ENCODE measurements at regions of chr15 and their contacts with region 1.

Region 1: GRCh38 chr15:78034495-78035191 is 42.9 kb downstream of the TBC1D2B start:
- DNase-seq: peak; percentile 66 to 76 (median 75)
- H3K4me3 ChIP-seq: peak overlapping the region in 1 of 3 experiments; percentile 63
- H3K4me3 Mint-ChIP-seq: peak overlapping the region; percentile 79 to 92
- H3K27ac ChIP-seq: peak overlapping the region; percentile 73 to 84
- H3K27ac Mint-ChIP-seq: peak overlapping the region; percentile 89 to 95 (median 92)
- H3K4me1 ChIP-seq: peaks cover 78 to 82% of the 10 kb centered on the region in 2 donors
- H3K4me1 Mint-ChIP-seq: peaks cover 79% of the 10 kb centered on the region
- H3K27me3 ChIP-seq: no peaks in the 10 kb centered on the region
- H3K27me3 Mint-ChIP-seq: peaks cover 0 to 1% (median 0%) of the 10 kb centered on the region in 3 donors
- CTCF ChIP-seq: no peak

Region 2: GRCh38 chr15:78049691-78050440 is 15.2 kb after region 1 on chr15:
- intact Hi-C with region 1: no loop called
- DNase-seq: peak in 1 of 3 donors; percentile 38
- H3K4me3 ChIP-seq: no peak overlapping the region
- H3K4me3 Mint-ChIP-seq: peak overlapping the region in 1 of 2 donors; percentile 62
- H3K27ac ChIP-seq: peak overlapping the region in 1 of 2 donors; percentile 33
- H3K27ac Mint-ChIP-seq: peak overlapping the region in 4 of 7 donors; percentile 14 to 73 (median 45)
- H3K4me1 ChIP-seq: peaks cover 58 to 65% of the 10 kb centered on the region in 2 donors
- H3K4me1 Mint-ChIP-seq: peaks cover 76% of the 10 kb centered on the region
- H3K27me3 ChIP-seq: no peaks in the 10 kb centered on the region
- H3K27me3 Mint-ChIP-seq: no peaks in the 10 kb centered on the region
- CTCF ChIP-seq: no peak

Region 3: DNA sequence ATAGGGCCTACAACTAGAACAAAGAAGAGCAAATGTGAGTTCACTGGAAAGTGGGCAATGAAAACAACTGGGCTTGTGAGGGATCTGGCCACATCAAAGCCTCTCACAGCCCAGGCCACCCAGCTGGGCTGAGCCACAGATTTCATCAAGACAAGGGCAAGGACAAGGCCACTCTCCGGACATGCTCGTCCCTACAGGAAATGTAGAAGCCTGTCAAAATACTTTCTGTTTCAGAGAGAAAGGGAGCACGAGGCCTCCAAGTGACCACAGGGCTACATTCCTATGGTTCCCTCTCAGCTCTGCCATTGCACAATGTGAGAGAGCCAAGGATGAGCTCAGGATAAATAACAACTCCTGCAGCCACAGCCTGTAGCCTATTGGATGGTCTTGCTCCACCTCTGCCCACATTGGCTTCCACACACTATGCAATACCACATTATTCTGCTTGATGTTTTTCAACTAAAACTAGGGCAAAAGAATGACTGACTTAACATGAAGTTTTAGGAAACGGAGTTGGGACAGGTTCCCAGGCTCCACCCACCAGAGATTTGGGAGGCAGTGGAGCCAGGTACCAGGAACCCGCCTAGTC is 30.7 kb after region 1 on chr15:
- intact Hi-C with region 1: loop called (anchors 5 kb)
- DNase-seq: peak; percentile 58 to 81 (median 76)
- H3K4me3 ChIP-seq: peak overlapping the region in 1 of 3 experiments; percentile 51
- H3K4me3 Mint-ChIP-seq: no peak overlapping the region
- H3K27ac ChIP-seq: peak overlapping the region; percentile 90 to 92
- H3K27ac Mint-ChIP-seq: peak overlapping the region in 1 of 7 donors; percentile 73
- H3K4me1 ChIP-seq: peaks cover 80 to 88% of the 10 kb centered on the region in 2 donors
- H3K4me1 Mint-ChIP-seq: peaks cover 10% of the 10 kb centered on the region
- H3K27me3 ChIP-seq: no peaks in the 10 kb centered on the region
- H3K27me3 Mint-ChIP-seq: no peaks in the 10 kb centered on the region
- CTCF ChIP-seq: no peak

Region 4: GRCh38 chr15:78072080-78072892 is 37.6 kb after region 1 on chr15:
- intact Hi-C with region 1: loop called (anchors 5 kb)
- DNase-seq: peak in 1 of 3 donors; percentile 59
- H3K4me3 ChIP-seq: peak overlapping the region in 1 of 3 experiments; percentile 56
- H3K4me3 Mint-ChIP-seq: peak overlapping the region; percentile 17 to 66
- H3K27ac ChIP-seq: peak overlapping the region; percentile 50 to 73
- H3K27ac Mint-ChIP-seq: peak overlapping the region; percentile 67 to 91 (median 74)
- H3K4me1 ChIP-seq: peaks cover 83 to 97% of the 10 kb centered on the region in 2 donors
- H3K4me1 Mint-ChIP-seq: peaks cover 36% of the 10 kb centered on the region
- H3K27me3 ChIP-seq: no peaks in the 10 kb centered on the region
- H3K27me3 Mint-ChIP-seq: no peaks in the 10 kb centered on the region
- CTCF ChIP-seq: no peak

Measured in CD14-positive monocyte (primary cell).